CD4-positive, alpha-beta memory T cell (primary cell): ENCODE measurements at regions of chr10 and their contacts with region 1.

Region 1: DNA sequence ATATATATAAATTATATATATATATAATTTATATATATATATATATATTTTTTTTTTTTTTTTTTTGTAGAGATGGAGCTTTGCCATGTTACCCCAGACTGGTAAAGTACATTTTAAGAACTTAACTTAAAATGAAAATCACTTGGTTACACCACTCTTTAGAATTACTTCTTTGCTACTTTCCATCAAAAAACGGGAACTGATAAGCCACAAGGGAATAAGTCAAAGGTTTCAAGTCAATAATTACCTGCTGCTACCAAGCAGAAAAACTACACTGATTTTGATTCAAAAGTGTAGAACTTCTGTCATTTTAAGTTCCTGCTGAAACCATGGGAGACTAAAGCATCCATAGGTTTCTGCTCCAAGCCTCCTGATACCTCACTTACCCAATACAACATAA is 12.2 kb downstream of the PPA1 start:
- DNase-seq: no peak
- H3K4me3 ChIP-seq: no peak overlapping the region
- H3K4me3 Mint-ChIP-seq: peak overlapping the region in 2 of 8 donors; percentile 62 to 64
- H3K27ac ChIP-seq: no peak overlapping the region
- H3K27ac Mint-ChIP-seq: peak overlapping the region in 5 of 7 donors; percentile 7 to 87 (median 65)
- H3K4me1 ChIP-seq: peaks cover 6% of the 10 kb centered on the region
- H3K4me1 Mint-ChIP-seq: peaks cover 12 to 24% (median 16%) of the 10 kb centered on the region in 4 donors
- H3K27me3 ChIP-seq: no peaks in the 10 kb centered on the region
- H3K27me3 Mint-ChIP-seq: no peaks in the 10 kb centered on the region

Region 2: DNA sequence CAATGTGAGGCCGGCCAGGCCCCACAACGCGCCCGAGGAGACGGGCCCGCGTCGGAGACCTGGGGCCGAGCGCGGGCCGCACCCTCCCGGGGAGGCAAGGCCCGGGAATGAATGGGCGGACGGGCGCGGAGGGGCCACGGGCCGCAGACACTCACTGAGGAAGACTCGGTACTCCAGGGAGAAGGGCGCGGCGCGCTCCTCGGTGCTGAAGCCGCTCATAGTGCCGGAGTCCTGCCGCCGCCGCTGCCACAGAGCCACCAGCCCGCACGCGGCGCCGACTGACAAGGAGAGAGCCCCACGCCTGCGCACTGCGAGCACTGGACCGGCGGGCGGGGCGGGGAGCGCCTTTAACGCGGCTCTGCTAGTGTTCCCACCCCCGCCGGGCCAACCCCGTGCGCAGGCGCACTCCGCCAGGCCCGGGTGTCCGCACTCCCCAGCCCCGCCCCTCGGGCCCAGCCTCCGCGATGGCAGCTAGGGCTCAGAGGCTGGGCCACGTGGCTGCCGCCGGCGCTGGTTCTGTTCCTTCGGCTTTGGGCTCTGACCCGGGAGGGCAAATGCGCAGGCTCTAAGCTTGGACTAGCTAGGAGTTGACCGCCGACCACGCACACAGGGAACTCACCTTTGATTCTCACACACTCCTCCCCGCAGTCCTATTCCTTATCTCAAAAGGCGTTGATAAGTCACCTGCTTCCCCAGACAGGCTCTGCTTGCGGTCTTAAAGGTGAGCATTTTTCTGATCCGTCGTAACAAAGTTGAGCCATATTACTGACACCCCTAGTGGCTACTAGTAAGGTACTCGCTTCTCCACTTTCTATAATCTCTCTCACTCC is 12.3 kb after region 1 on chr10 and contains the start of gene PPA1:
- CTCF ChIA-PET with region 1: interaction called, 82 read pairs
- POLR2A ChIA-PET with region 1: interaction called, 22 read pairs
- intact Hi-C with region 1: no loop called
- DNase-seq: peak; percentile 98 to 100 (median 99)
- H3K4me3 ChIP-seq: peak within 1 kb of the TSS; percentile 67 to 77
- H3K4me3 Mint-ChIP-seq: peak within 1 kb of the TSS; percentile 89 to 94 (median 91)
- H3K27ac ChIP-seq: peak within 1 kb of the TSS; percentile 82
- H3K27ac Mint-ChIP-seq: peak within 1 kb of the TSS; percentile 88 to 97 (median 96)
- H3K4me1 ChIP-seq: peaks cover 20% of the 10 kb centered on the region
- H3K4me1 Mint-ChIP-seq: peaks cover 14 to 42% (median 29%) of the 10 kb centered on the region in 4 donors
- H3K27me3 ChIP-seq: no peaks in the 10 kb centered on the region
- H3K27me3 Mint-ChIP-seq: peaks cover 0 to 1% of the 10 kb centered on the region in 2 donors
- total RNA-seq, gene PPA1: 57.4 to 60.4 TPM

Region 3: DNA sequence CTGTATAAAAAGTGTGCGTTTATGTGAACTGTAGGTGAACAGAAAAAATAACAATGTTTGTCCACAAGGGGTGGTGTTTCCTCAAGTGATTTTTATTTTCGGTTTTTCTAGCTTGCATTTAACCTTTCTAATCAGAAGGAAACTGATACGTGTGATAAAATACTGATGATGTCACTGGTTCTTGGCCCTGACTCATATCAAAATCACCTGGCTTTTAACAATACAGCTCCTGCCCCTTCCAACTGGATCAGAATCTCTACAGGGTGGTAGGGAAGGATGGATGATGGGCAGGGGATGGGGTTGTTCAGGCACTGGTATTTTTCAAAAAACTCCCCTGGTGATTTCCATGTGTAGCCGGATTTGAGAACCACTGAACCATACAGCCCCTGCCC is 51.9 kb after region 1 on chr10:
- CTCF ChIA-PET with region 1: interaction called, 32 read pairs
- POLR2A ChIA-PET with region 1: no interaction called
- intact Hi-C with region 1: loop called (anchors 5 kb)
- DNase-seq: peak in 4 of 5 donors; percentile 29 to 53 (median 42)
- H3K4me3 ChIP-seq: no peak overlapping the region
- H3K4me3 Mint-ChIP-seq: peak overlapping the region in 7 of 8 donors; percentile 21 to 73 (median 42)
- H3K27ac ChIP-seq: no peak overlapping the region
- H3K27ac Mint-ChIP-seq: peak overlapping the region in 4 of 7 donors; percentile 29 to 86 (median 65)
- H3K4me1 ChIP-seq: peaks cover 7% of the 10 kb centered on the region
- H3K4me1 Mint-ChIP-seq: peaks cover 6 to 9% (median 8%) of the 10 kb centered on the region in 4 donors
- H3K27me3 ChIP-seq: no peaks in the 10 kb centered on the region
- H3K27me3 Mint-ChIP-seq: no peaks in the 10 kb centered on the region

Region 4: GRCh38 chr10:70348228-70348850 is 127.3 kb after region 1 on chr10:
- CTCF ChIA-PET with region 1: interaction called, 558 read pairs
- POLR2A ChIA-PET with region 1: no interaction called
- intact Hi-C with region 1: no loop called
- DNase-seq: no peak
- H3K4me3 ChIP-seq: no peak overlapping the region
- H3K4me3 Mint-ChIP-seq: no peak overlapping the region
- H3K27ac ChIP-seq: no peak overlapping the region
- H3K27ac Mint-ChIP-seq: peak overlapping the region in 1 of 7 donors; percentile 45
- H3K4me1 ChIP-seq: no peaks in the 10 kb centered on the region
- H3K4me1 Mint-ChIP-seq: no peaks in the 10 kb centered on the region
- H3K27me3 ChIP-seq: no peaks in the 10 kb centered on the region
- H3K27me3 Mint-ChIP-seq: no peaks in the 10 kb centered on the region

Region 5: DNA sequence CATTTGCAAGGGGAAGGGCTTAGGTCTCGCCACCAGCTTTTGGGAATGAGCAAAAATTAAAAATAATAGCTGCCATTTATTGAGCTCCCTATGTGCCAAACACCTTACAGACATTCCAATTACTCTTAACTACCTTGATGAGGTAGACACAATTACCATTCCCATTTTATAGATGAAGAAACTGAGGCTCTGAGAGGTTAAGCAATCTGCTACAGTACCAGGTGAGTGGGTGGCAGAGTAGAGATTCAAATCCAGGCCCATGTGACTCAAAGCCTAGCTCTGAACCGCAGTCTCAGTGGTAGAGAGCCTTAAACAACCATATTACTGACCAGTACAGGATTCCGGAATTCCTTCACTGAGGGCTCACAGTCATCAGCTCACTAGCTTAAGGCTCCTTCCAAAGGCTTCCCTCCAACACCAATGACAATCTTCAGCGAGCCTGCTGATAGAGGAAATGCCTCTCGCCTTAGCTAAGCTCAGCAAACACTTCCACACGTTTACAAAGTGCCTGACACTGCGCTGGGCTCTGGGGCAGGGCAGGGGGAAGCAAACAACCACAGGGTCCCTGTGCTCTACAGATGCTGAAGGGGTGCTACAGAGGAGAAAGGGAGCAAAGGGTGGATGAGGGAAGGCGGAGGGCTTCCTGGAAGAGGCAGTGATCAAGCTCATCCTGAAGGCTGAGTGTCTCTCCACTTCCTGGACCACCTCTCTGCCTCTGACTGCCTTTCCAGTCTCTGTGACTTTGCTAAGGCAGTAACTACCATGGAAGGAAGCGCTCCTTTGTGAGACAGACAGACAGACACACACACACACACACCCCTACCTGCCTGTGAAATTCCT is 154.0 kb after region 1 on chr10:
- CTCF ChIA-PET with region 1: interaction called, 558 read pairs
- POLR2A ChIA-PET with region 1: no interaction called
- intact Hi-C with region 1: no loop called
- DNase-seq: no peak
- H3K4me3 ChIP-seq: no peak overlapping the region
- H3K4me3 Mint-ChIP-seq: no peak overlapping the region
- H3K27ac ChIP-seq: no peak overlapping the region
- H3K27ac Mint-ChIP-seq: peak overlapping the region in 1 of 7 donors; percentile 13
- H3K4me1 ChIP-seq: no peaks in the 10 kb centered on the region
- H3K4me1 Mint-ChIP-seq: no peaks in the 10 kb centered on the region
- H3K27me3 ChIP-seq: no peaks in the 10 kb centered on the region
- H3K27me3 Mint-ChIP-seq: no peaks in the 10 kb centered on the region

Region 6: GRCh38 chr10:70540089-70540788 is 319.2 kb after region 1 on chr10:
- CTCF ChIA-PET with region 1: no interaction called
- POLR2A ChIA-PET with region 1: no interaction called
- intact Hi-C with region 1: loop called (anchors 5 kb)
- DNase-seq: peak in 1 of 5 donors; percentile 10
- H3K4me3 ChIP-seq: no peak overlapping the region
- H3K4me3 Mint-ChIP-seq: no peak overlapping the region
- H3K27ac ChIP-seq: no peak overlapping the region
- H3K27ac Mint-ChIP-seq: peak overlapping the region in 1 of 7 donors; percentile 15
- H3K4me1 ChIP-seq: no peaks in the 10 kb centered on the region
- H3K4me1 Mint-ChIP-seq: no peaks in the 10 kb centered on the region
- H3K27me3 ChIP-seq: no peaks in the 10 kb centered on the region
- H3K27me3 Mint-ChIP-seq: no peaks in the 10 kb centered on the region

Region 7: DNA sequence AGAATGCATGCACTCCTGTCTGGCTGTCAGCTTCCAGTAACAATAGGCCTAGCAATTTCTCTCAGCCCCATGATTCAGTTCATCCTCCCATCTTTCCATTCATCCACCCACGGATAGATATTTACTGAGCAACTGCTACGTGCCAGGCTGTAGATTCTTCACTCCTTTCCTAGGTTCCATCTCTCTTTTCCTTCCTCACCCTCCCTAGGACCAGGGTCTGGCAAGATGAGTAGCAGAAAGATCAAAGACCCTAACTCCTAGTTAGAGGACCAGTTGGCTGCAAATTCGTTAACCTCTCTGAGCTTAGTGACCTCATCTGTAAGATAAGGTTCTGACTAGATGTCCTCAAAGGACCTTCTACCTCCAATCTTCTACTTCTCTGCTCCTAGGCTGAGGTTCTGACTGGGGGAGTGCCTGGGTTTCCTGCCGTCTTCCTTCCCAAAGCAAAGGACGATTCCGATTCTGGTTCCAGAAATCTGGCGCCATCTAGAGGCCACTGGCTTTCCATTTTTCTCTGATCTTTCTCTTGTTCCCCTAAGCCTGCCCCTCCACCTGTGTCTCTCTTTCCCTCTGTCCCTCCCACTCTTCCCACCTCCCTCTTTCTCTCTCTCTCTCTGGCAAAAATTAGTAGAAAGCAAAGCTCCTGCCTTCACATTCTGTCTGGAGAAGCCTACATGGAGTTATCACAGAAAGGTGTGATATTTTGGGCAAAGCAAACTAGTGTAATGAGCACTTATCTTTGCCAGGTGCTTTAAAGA is 537.9 kb after region 1 on chr10:
- CTCF ChIA-PET with region 1: no interaction called
- POLR2A ChIA-PET with region 1: no interaction called
- intact Hi-C with region 1: loop called (anchors 5 kb)
- DNase-seq: peak; percentile 43 to 62 (median 55)
- H3K4me3 ChIP-seq: no peak overlapping the region
- H3K4me3 Mint-ChIP-seq: no peak overlapping the region
- H3K27ac ChIP-seq: no peak overlapping the region
- H3K27ac Mint-ChIP-seq: no peak overlapping the region
- H3K4me1 ChIP-seq: no peaks in the 10 kb centered on the region
- H3K4me1 Mint-ChIP-seq: peaks cover 0 to 2% (median under 1%) of the 10 kb centered on the region in 4 donors
- H3K27me3 ChIP-seq: no peaks in the 10 kb centered on the region
- H3K27me3 Mint-ChIP-seq: no peaks in the 10 kb centered on the region